ENCODE measurements at regions of chr12 and their contacts with region 1.

Region 1: GRCh38 chr12:56521590-56522371 is at the start of gene RBMS2:
- DNase-seq: no peak
- ATAC-seq: peak; percentile 90
- H3K4me3 ChIP-seq: peak within 1 kb of the TSS; percentile 55 to 77
- H3K27ac ChIP-seq: peak within 1 kb of the TSS; percentile 83
- H3K4me1 ChIP-seq: peaks cover 10% of the 10 kb centered on the region; the same call in 1 of the 2 replicates
- H3K27me3 ChIP-seq: no peaks in the 10 kb centered on the region
- CTCF ChIP-seq: no peak
- total RNA-seq, gene RBMS2: 18.2 TPM

Region 2: GRCh38 chr12:54940727-54941315 is 1581.0 kb before region 1 on chr12:
- CTCF ChIA-PET with region 1: no interaction called
- POLR2A ChIA-PET with region 1: interaction called, 16 read pairs
- in situ Hi-C with region 1: no loop called
- intact Hi-C with region 1: no loop called
- DNase-seq: no peak
- ATAC-seq: no peak
- H3K4me3 ChIP-seq: no peak overlapping the region
- H3K27ac ChIP-seq: no peak overlapping the region
- H3K4me1 ChIP-seq: no peaks in the 10 kb centered on the region
- H3K27me3 ChIP-seq: no peaks in the 10 kb centered on the region
- CTCF ChIP-seq: no peak

Region 3: DNA sequence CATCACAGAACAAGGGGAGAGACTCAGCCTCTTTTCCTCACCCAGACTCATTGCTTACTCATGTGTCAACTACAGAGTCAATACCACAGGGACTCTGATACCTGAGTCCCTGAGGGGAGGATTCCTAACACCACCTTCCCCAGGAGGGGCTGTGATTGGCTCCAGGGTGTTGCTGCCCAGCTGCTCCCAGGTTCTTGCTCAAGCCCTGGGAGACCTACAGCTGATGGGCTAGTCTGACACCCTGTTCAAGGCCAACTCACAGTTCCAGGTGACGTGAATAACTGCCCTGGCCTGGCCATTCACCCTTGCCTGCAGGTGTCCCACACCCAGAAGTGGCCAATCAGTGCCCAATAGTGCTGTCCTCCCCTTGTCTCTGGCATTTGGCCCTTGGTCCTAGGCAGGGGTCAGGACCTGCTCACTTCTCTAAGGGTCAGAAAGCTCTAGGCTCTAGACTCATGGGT is 44.8 kb before region 1 on chr12:
- CTCF ChIA-PET with region 1: no interaction called
- POLR2A ChIA-PET with region 1: no interaction called
- in situ Hi-C with region 1: no loop called
- intact Hi-C with region 1: no loop called
- DNase-seq: no peak
- ATAC-seq: no peak
- H3K4me3 ChIP-seq: no peak overlapping the region
- H3K27ac ChIP-seq: no peak overlapping the region
- H3K4me1 ChIP-seq: no peaks in the 10 kb centered on the region
- H3K27me3 ChIP-seq: no peaks in the 10 kb centered on the region
- CTCF ChIP-seq: no peak